Calu3 (cell line): ENCODE measurements at regions of chr5 and their contacts with region 1.

Region 1: DNA sequence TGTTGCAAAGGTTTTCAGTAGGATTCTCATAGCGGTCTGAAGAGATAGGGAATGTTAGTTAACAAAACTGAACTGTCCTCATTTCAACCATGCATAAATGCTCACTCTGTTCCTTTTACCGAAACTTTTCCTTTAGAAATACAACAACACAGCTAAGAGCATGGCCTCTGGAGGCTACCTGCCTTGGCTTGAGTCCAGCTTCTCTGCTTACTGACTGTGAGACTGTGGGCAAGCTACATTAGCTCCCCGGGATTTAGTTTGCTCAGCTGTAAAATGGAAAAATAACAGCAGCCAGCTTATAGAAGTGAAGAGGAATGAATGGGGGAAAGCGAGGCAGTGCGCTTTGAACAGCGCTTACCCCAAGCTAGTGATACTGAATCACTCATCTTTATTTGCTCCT is 507.9 kb upstream of the DAP start:
- DNase-seq: no peak
- H3K4me3 Mint-ChIP-seq: no peak overlapping the region
- H3K27ac Mint-ChIP-seq: no peak overlapping the region
- H3K4me1 Mint-ChIP-seq: no peaks in the 10 kb centered on the region
- H3K27me3 Mint-ChIP-seq: no peaks in the 10 kb centered on the region
- CTCF ChIP-seq: no peak

Region 2: DNA sequence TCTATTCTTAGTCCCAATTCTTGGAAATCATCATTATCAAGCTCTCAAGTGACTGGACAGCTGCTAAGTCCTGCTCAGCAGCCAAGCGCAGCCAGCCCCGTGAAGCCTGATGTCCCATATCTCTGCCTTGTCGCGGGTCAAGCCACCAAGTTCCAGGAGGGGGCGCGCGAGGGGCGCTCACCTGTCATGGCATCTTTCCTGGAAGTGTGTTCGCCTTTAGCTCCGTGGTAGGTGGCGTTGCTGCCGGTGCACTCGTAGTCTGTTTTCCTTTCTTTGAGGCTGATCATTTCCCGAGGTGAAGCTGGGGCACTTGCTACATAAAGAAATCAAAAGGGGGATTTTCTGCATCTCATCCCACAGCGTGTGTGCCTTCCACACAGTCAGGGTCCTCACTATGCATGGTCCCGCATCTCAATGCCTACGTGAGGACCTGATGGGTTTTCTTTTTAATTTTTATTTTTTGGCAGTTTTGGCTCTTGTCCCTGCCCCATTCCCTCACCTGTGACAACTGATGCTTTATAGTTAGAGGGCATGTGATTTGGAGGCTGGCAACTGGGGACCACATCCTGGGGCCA is 280.9 kb before region 1 on chr5:
- CTCF ChIA-PET with region 1: no interaction called
- intact Hi-C with region 1: no loop called
- DNase-seq: peak; percentile 93
- H3K4me3 Mint-ChIP-seq: peak overlapping the region; percentile 32
- H3K27ac Mint-ChIP-seq: no peak overlapping the region
- H3K4me1 Mint-ChIP-seq: peaks cover 13% of the 10 kb centered on the region
- H3K27me3 Mint-ChIP-seq: no peaks in the 10 kb centered on the region
- CTCF ChIP-seq: peak; percentile 79

Region 3: GRCh38 chr5:11252075-11252474 is 16.8 kb before region 1 on chr5:
- CTCF ChIA-PET with region 1: no interaction called
- intact Hi-C with region 1: no loop called
- DNase-seq: no peak
- H3K4me3 Mint-ChIP-seq: no peak overlapping the region
- H3K27ac Mint-ChIP-seq: no peak overlapping the region
- H3K4me1 Mint-ChIP-seq: peaks cover 27% of the 10 kb centered on the region
- H3K27me3 Mint-ChIP-seq: no peaks in the 10 kb centered on the region
- CTCF ChIP-seq: no peak

Region 4: DNA sequence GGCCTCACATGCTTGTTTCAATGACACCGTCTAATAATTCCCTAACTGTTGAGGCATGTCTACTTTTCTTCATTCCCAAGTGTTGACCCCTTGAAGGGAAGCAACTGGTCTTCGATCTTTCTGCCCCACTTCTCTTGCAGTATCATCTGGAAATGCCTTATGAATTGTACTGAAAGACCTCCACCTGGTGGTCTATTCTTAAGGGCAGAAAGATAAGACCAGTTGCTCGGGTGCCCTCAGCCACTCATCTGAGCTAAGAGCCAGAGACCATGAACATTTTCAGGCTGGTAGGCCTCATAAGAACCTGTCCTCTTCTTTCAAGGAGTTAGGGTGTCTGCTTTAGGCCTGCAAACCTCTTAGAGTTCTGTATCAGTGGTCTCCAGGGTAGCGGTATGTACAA is 92.9 kb after region 1 on chr5:
- CTCF ChIA-PET with region 1: no interaction called
- intact Hi-C with region 1: loop called (anchors 1 kb)
- DNase-seq: no peak
- H3K4me3 Mint-ChIP-seq: no peak overlapping the region
- H3K27ac Mint-ChIP-seq: no peak overlapping the region
- H3K4me1 Mint-ChIP-seq: no peaks in the 10 kb centered on the region
- H3K27me3 Mint-ChIP-seq: no peaks in the 10 kb centered on the region
- CTCF ChIP-seq: no peak

Region 5: GRCh38 chr5:11494340-11494739 is 225.4 kb after region 1 on chr5:
- CTCF ChIA-PET with region 1: no interaction called
- intact Hi-C with region 1: loop called (anchors 2 kb)
- DNase-seq: no peak
- H3K4me3 Mint-ChIP-seq: no peak overlapping the region
- H3K27ac Mint-ChIP-seq: no peak overlapping the region
- H3K4me1 Mint-ChIP-seq: peaks cover 11% of the 10 kb centered on the region
- H3K27me3 Mint-ChIP-seq: no peaks in the 10 kb centered on the region
- CTCF ChIP-seq: no peak

Region 6: GRCh38 chr5:11619339-11620024 is 350.6 kb after region 1 on chr5:
- CTCF ChIA-PET with region 1: interaction called, 3 read pairs
- intact Hi-C with region 1: loop called (anchors 1 kb)
- DNase-seq: peak; percentile 18
- H3K4me3 Mint-ChIP-seq: no peak overlapping the region
- H3K27ac Mint-ChIP-seq: no peak overlapping the region
- H3K4me1 Mint-ChIP-seq: peaks cover 13% of the 10 kb centered on the region
- H3K27me3 Mint-ChIP-seq: no peaks in the 10 kb centered on the region
- CTCF ChIP-seq: no peak

Region 7: GRCh38 chr5:11719888-11720481 is 451.1 kb after region 1 on chr5:
- CTCF ChIA-PET with region 1: no interaction called
- intact Hi-C with region 1: loop called (anchors 1 kb)
- DNase-seq: peak; percentile 73
- H3K4me3 Mint-ChIP-seq: no peak overlapping the region
- H3K27ac Mint-ChIP-seq: no peak overlapping the region
- H3K4me1 Mint-ChIP-seq: peaks cover 3% of the 10 kb centered on the region
- H3K27me3 Mint-ChIP-seq: no peaks in the 10 kb centered on the region
- CTCF ChIP-seq: peak; percentile 53

Region 8: GRCh38 chr5:12023614-12024241 is 754.8 kb after region 1 on chr5:
- CTCF ChIA-PET with region 1: interaction called, 4 read pairs
- intact Hi-C with region 1: loop called (anchors 1 kb)
- DNase-seq: peak; percentile 46
- H3K4me3 Mint-ChIP-seq: no peak overlapping the region
- H3K27ac Mint-ChIP-seq: no peak overlapping the region
- H3K4me1 Mint-ChIP-seq: no peaks in the 10 kb centered on the region
- H3K27me3 Mint-ChIP-seq: no peaks in the 10 kb centered on the region
- CTCF ChIP-seq: peak; percentile 51